CD8-positive, alpha-beta memory T cell (primary cell): ENCODE measurements at regions of chr12 and their contacts with region 1.

Region 1: GRCh38 chr12:132218915-132219314 is 74.7 kb downstream of the NOC4L start:
- DNase-seq: peak in 3 of 5 donors; percentile 11 to 48 (median 27)
- H3K4me3 ChIP-seq: no peak overlapping the region
- H3K4me3 Mint-ChIP-seq: no peak overlapping the region
- H3K27ac ChIP-seq: no peak overlapping the region
- H3K27ac Mint-ChIP-seq: peak overlapping the region in 2 of 8 donors; percentile 14 to 52
- H3K4me1 ChIP-seq: peaks cover 8% of the 10 kb centered on the region
- H3K4me1 Mint-ChIP-seq: peaks cover 8 to 12% (median 10%) of the 10 kb centered on the region in 3 donors
- H3K27me3 ChIP-seq: no peaks in the 10 kb centered on the region
- H3K27me3 Mint-ChIP-seq: peaks cover 3 to 21% of the 10 kb centered on the region in 2 donors

Region 2: GRCh38 chr12:132153501-132154340 is 65.2 kb before region 1 on chr12:
- CTCF ChIA-PET with region 1: interaction called, 18 read pairs
- POLR2A ChIA-PET with region 1: interaction called, 4 read pairs
- DNase-seq: peak; percentile 55 to 79 (median 71)
- H3K4me3 ChIP-seq: peak overlapping the region; percentile 45
- H3K4me3 Mint-ChIP-seq: peak overlapping the region in 4 of 7 donors; percentile 28 to 80 (median 40)
- H3K27ac ChIP-seq: no peak overlapping the region
- H3K27ac Mint-ChIP-seq: peak overlapping the region in 3 of 8 donors; percentile 17 to 54 (median 38)
- H3K4me1 ChIP-seq: no peaks in the 10 kb centered on the region
- H3K4me1 Mint-ChIP-seq: peaks cover 0 to 5% (median 0%) of the 10 kb centered on the region in 3 donors
- H3K27me3 ChIP-seq: no peaks in the 10 kb centered on the region
- H3K27me3 Mint-ChIP-seq: no peaks in the 10 kb centered on the region